Caco-2 (cell line): ENCODE measurements at regions of chr16 and their contacts with region 1.

Region 1: GRCh38 chr16:67017810-67018488 is 11.0 kb upstream of the CBFB start:
- DNase-seq: peak; percentile 95 to 97
- H3K4me3 ChIP-seq: no peak overlapping the region
- H3K4me3 Mint-ChIP-seq: no peak overlapping the region
- H3K27ac Mint-ChIP-seq: no peak overlapping the region
- H3K4me1 ChIP-seq: peaks cover 17% of the 10 kb centered on the region
- H3K4me1 Mint-ChIP-seq: peaks cover 19% of the 10 kb centered on the region
- H3K27me3 ChIP-seq: no peaks in the 10 kb centered on the region
- H3K27me3 Mint-ChIP-seq: no peaks in the 10 kb centered on the region
- CTCF ChIP-seq: peak; percentile 87 to 88

Region 2: GRCh38 chr16:66295761-66296520 is 722.0 kb before region 1 on chr16:
- CTCF ChIA-PET with region 1: no interaction called
- POLR2A ChIA-PET with region 1: no interaction called
- intact Hi-C with region 1: no loop called
- DNase-seq: peak in 1 of 2 experiments; percentile 47
- H3K4me3 ChIP-seq: no peak overlapping the region
- H3K4me3 Mint-ChIP-seq: no peak overlapping the region
- H3K27ac Mint-ChIP-seq: no peak overlapping the region
- H3K4me1 ChIP-seq: no peaks in the 10 kb centered on the region
- H3K4me1 Mint-ChIP-seq: no peaks in the 10 kb centered on the region
- H3K27me3 ChIP-seq: no peaks in the 10 kb centered on the region; the same call in 1 of the 2 replicates
- H3K27me3 Mint-ChIP-seq: peaks cover 29% of the 10 kb centered on the region
- CTCF ChIP-seq: no peak

Region 3: GRCh38 chr16:66858740-66859396 is 159.1 kb before region 1 on chr16:
- CTCF ChIA-PET with region 1: no interaction called
- POLR2A ChIA-PET with region 1: no interaction called
- intact Hi-C with region 1: no loop called
- DNase-seq: no peak
- H3K4me3 ChIP-seq: no peak overlapping the region
- H3K4me3 Mint-ChIP-seq: no peak overlapping the region
- H3K27ac Mint-ChIP-seq: no peak overlapping the region
- H3K4me1 ChIP-seq: peaks cover 30% of the 10 kb centered on the region
- H3K4me1 Mint-ChIP-seq: peaks cover 12% of the 10 kb centered on the region
- H3K27me3 ChIP-seq: no peaks in the 10 kb centered on the region
- H3K27me3 Mint-ChIP-seq: no peaks in the 10 kb centered on the region
- CTCF ChIP-seq: no peak

Region 4: GRCh38 chr16:66954097-66954659 is 63.8 kb before region 1 on chr16:
- CTCF ChIA-PET with region 1: interaction called, 12 read pairs
- POLR2A ChIA-PET with region 1: no interaction called
- intact Hi-C with region 1: loop called (anchors 1 kb)
- DNase-seq: peak; percentile 81 to 88
- H3K4me3 ChIP-seq: no peak overlapping the region
- H3K4me3 Mint-ChIP-seq: peak overlapping the region; percentile 50
- H3K27ac Mint-ChIP-seq: peak overlapping the region; percentile 72
- H3K4me1 ChIP-seq: peaks cover 17% of the 10 kb centered on the region
- H3K4me1 Mint-ChIP-seq: peaks cover 15% of the 10 kb centered on the region
- H3K27me3 ChIP-seq: no peaks in the 10 kb centered on the region
- H3K27me3 Mint-ChIP-seq: no peaks in the 10 kb centered on the region
- CTCF ChIP-seq: peak; percentile 88 to 90

Region 5: GRCh38 chr16:67028555-67029248 is 10.8 kb after region 1 on chr16 and contains the start of gene CBFB:
- CTCF ChIA-PET with region 1: interaction called, 19 read pairs
- POLR2A ChIA-PET with region 1: interaction called, 30 read pairs
- intact Hi-C with region 1: loop called (anchors 1 kb)
- DNase-seq: peak; percentile 96 to 98
- H3K4me3 ChIP-seq: peak within 1 kb of the TSS; percentile 91
- H3K4me3 Mint-ChIP-seq: peak within 1 kb of the TSS; percentile 80
- H3K27ac Mint-ChIP-seq: peak within 1 kb of the TSS; percentile 90
- H3K4me1 ChIP-seq: peaks cover 24% of the 10 kb centered on the region
- H3K4me1 Mint-ChIP-seq: peaks cover 26% of the 10 kb centered on the region
- H3K27me3 ChIP-seq: no peaks in the 10 kb centered on the region
- H3K27me3 Mint-ChIP-seq: no peaks in the 10 kb centered on the region
- CTCF ChIP-seq: peak; percentile 30 to 49
- total RNA-seq, gene CBFB: 102 and 108 TPM in 2 replicates

Region 6: DNA sequence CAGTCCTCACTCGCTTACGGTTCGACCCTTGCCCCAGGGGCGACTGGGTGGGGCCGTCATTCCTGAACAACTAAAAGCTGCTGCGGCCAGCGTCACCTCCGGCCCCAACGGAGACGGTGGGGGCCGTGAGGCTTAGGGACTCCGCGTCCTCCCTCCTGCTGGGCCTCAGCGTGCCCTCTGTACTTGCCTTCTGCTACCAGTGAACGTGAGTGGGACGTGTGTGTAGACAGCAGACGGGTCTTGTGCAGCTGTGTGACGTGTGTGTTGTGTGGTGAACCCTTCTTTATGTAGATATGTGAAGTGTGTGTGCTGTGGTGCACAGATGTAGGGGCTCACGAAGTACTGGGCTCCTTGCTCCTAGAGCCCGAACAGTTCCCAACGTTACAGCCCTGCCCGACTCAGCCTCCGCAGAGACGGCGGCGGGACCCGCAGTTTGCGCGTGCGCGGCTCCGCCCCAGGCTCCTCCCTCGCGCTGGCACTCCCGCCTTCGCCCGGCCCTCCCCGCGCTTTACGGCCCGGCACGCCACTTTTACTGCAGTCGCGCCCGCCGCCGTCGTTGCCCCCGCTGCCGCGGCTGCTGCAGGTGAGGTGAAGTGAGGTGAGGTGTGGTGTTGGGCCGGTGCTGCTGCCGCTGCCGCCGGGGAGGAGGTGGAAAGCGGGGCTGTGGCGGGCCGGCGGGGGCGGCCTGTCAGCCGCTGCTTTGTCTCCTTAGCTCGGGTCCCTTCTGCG is 91.6 kb after region 1 on chr16 and contains the start of gene PHAF1:
- CTCF ChIA-PET with region 1: interaction called, 28 read pairs
- POLR2A ChIA-PET with region 1: no interaction called
- intact Hi-C with region 1: loop called (anchors 2 kb)
- DNase-seq: peak; percentile 96 to 99
- H3K4me3 ChIP-seq: peak within 1 kb of the TSS; percentile 67
- H3K4me3 Mint-ChIP-seq: peak within 1 kb of the TSS; percentile 97
- H3K27ac Mint-ChIP-seq: peak within 1 kb of the TSS; percentile 93
- H3K4me1 ChIP-seq: peaks cover 42% of the 10 kb centered on the region
- H3K4me1 Mint-ChIP-seq: peaks cover 26% of the 10 kb centered on the region
- H3K27me3 ChIP-seq: no peaks in the 10 kb centered on the region
- H3K27me3 Mint-ChIP-seq: no peaks in the 10 kb centered on the region
- CTCF ChIP-seq: no peak
- total RNA-seq, gene PHAF1: 34.4 and 38.5 TPM in 2 replicates

Region 7: DNA sequence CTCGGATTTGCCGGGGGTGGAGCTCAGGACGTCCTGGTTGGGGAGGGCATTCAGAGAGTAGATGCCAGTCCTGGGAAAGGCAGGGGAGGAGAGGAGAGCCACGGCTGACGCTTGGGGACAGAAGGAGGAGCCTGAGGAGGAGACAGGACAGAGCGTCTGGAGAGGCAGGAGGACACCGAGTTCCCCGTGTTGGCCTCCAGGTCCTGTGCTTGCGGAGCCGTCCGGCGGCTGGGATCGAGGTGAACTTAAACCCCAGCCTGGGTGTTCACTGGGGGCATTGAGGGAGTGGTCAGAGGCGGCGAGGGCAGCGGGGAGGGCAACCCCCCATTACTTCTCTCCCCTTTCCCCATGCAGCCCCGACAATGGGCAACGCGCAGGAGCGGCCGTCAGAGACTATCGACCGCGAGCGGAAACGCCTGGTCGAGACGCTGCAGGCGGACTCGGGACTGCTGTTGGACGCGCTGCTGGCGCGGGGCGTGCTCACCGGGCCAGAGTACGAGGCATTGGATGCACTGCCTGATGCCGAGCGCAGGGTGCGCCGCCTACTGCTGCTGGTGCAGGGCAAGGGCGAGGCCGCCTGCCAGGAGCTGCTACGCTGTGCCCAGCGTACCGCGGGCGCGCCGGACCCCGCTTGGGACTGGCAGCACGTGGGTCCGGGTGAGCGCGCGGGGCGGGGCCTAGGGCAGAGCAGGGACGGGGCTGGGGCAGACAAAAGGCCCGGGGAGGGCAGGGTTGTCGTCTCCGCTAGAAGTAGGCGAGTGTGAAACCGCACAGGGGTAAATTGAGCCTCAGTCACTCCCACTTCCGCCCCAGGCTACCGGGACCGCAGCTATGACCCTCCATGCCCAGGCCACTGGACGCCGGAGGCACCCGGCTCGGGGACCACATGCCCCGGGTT is 156.1 kb after region 1 on chr16:
- CTCF ChIA-PET with region 1: interaction called, 17 read pairs
- POLR2A ChIA-PET with region 1: interaction called, 8 read pairs
- intact Hi-C with region 1: no loop called
- DNase-seq: peak; percentile 82 to 86
- H3K4me3 ChIP-seq: peak overlapping the region; percentile 41
- H3K4me3 Mint-ChIP-seq: peak overlapping the region; percentile 78
- H3K27ac Mint-ChIP-seq: peak overlapping the region; percentile 53
- H3K4me1 ChIP-seq: peaks cover 36% of the 10 kb centered on the region
- H3K4me1 Mint-ChIP-seq: peaks cover 42% of the 10 kb centered on the region
- H3K27me3 ChIP-seq: no peaks in the 10 kb centered on the region
- H3K27me3 Mint-ChIP-seq: no peaks in the 10 kb centered on the region
- CTCF ChIP-seq: peak in 1 of 2 experiments; percentile 50